Esophagus muscularis mucosa (tissue), 4 donors: ENCODE measurements at regions of chr6 and their contacts with region 1.

Region 1: GRCh38 chr6:57165080-57165479 is 7.0 kb upstream of the BAG2 start:
- DNase-seq: no peak
- H3K4me3 ChIP-seq: no peak overlapping the region
- H3K27ac ChIP-seq: no peak overlapping the region
- H3K4me1 ChIP-seq: no peaks in the 10 kb centered on the region
- H3K27me3 ChIP-seq: no peaks in the 10 kb centered on the region
- CTCF ChIP-seq: no peak
- EP300 ChIP-seq: no peak
- POLR2A ChIP-seq: no peak

Region 2: GRCh38 chr6:57029188-57029587 is 135.9 kb before region 1 on chr6:
- intact Hi-C with region 1: no loop called
- DNase-seq: no peak
- H3K4me3 ChIP-seq: no peak overlapping the region
- H3K27ac ChIP-seq: no peak overlapping the region
- H3K4me1 ChIP-seq: no peaks in the 10 kb centered on the region
- H3K27me3 ChIP-seq: no peaks in the 10 kb centered on the region
- CTCF ChIP-seq: no peak
- EP300 ChIP-seq: no peak
- POLR2A ChIP-seq: no peak

Region 3: DNA sequence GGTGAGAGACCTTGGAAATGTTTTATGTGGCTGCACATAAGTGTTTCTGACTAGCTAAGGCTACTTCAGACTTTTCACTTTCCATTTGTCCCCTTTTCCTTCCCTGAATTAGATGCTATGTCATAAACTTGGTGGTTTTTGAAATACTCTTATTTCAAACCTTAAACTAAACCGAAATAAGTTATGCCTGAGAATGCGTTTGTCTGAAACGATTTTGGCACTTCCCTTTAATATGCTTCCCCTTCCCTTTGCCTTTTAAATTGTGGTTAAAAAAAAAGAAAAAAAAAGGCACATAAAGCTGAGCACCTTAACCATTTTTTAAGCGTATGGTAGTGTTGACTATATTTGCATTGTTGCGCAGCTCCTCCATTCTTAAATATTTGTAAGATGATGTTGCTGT is 60.7 kb before region 1 on chr6:
- intact Hi-C with region 1: loop called (anchors 5 kb)
- DNase-seq: no peak
- H3K4me3 ChIP-seq: no peak overlapping the region
- H3K27ac ChIP-seq: no peak overlapping the region
- H3K4me1 ChIP-seq: peaks cover 0 to 8% (median 2%) of the 10 kb centered on the region in 4 donors
- H3K27me3 ChIP-seq: no peaks in the 10 kb centered on the region
- CTCF ChIP-seq: no peak
- EP300 ChIP-seq: no peak
- POLR2A ChIP-seq: no peak

Region 4: DNA sequence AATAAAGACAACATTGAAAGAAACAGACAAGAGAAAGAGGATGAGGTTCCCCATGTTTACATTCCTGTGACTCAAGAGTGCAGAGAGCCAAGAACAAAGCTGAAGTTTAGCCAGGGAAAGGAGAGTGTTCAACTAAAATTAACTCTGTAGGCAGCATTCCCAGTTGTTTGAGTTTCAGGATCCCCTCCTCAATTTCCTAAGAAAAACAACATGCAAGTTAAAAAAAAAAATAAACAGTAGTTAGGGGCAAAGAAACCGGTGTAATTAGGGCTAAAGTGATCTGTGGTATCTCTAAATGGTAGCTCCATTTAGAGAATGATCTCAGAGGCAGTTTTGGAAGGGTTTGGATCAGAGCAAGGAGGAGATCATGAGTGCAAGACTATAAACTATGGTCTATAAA is 87.9 kb after region 1 on chr6:
- intact Hi-C with region 1: no loop called
- DNase-seq: no peak
- H3K4me3 ChIP-seq: no peak overlapping the region
- H3K27ac ChIP-seq: peak overlapping the region; percentile 82 to 84 (median 83)
- H3K4me1 ChIP-seq: peaks cover 6 to 53% (median 44%) of the 10 kb centered on the region in 4 donors
- H3K27me3 ChIP-seq: no peaks in the 10 kb centered on the region
- CTCF ChIP-seq: no peak
- EP300 ChIP-seq: no peak
- POLR2A ChIP-seq: no peak